Esophagus muscularis mucosa (tissue), 4 donors: ENCODE measurements at regions of chr16 and their contacts with region 1.

Region 1: DNA sequence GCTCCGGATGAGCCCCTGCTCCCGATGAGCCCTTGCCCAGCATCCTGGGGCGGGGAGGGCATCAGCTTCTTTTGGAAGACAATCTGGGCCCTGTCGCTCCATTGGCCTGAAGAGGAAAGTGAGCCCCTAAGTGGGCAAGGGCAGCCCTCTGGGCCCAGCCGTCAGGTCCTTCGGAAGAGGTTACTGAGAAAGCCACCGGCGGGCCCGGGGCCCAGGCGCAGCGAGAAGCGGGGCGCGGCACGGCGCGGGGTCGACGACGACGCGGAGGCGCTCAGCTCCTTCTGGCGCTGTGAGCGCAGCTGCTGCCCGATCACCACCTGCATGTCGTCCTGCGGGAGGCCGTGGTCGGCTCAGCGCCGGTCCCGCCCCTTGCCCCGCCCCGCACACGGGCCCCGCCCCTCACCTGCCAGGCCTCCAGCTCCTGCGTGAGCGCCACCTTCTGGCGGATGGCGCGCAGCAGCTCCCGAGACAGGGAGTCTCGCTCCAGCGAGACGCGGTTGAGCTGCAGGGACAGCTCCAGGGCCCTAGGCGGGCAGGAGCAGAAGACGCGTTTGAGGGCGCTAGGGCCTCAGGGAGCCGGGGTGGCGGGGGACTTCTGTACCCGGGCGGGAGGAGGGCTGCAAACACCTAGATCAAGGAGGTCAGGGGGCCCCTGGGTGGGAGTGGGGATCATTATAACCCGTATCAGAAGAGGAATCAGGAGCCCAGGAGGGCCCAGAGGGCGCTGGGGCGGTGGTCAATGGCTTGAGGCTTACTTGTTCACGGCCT is 4.3 kb downstream of the THOC6 start:
- DNase-seq: no peak
- H3K4me3 ChIP-seq: peak overlapping the region in 3 of 4 donors; percentile 16 to 33 (median 22)
- H3K27ac ChIP-seq: peak overlapping the region in 1 of 4 donors; percentile 34
- H3K4me1 ChIP-seq: peaks cover 27 to 52% (median 45%) of the 10 kb centered on the region in 4 donors
- H3K27me3 ChIP-seq: peaks cover 0 to 46% (median 24%) of the 10 kb centered on the region in 4 donors
- CTCF ChIP-seq: peak; percentile 76 to 88 (median 81)
- EP300 ChIP-seq: no peak
- POLR2A ChIP-seq: no peak

Region 2: GRCh38 chr16:2686912-2687507 is 341.1 kb before region 1 on chr16:
- intact Hi-C with region 1: no loop called
- DNase-seq: no peak
- H3K4me3 ChIP-seq: no peak overlapping the region
- H3K27ac ChIP-seq: no peak overlapping the region
- H3K4me1 ChIP-seq: peaks cover 21 to 51% (median 32%) of the 10 kb centered on the region in 4 donors
- H3K27me3 ChIP-seq: no peaks in the 10 kb centered on the region
- CTCF ChIP-seq: no peak
- EP300 ChIP-seq: no peak
- POLR2A ChIP-seq: no peak

Region 3: DNA sequence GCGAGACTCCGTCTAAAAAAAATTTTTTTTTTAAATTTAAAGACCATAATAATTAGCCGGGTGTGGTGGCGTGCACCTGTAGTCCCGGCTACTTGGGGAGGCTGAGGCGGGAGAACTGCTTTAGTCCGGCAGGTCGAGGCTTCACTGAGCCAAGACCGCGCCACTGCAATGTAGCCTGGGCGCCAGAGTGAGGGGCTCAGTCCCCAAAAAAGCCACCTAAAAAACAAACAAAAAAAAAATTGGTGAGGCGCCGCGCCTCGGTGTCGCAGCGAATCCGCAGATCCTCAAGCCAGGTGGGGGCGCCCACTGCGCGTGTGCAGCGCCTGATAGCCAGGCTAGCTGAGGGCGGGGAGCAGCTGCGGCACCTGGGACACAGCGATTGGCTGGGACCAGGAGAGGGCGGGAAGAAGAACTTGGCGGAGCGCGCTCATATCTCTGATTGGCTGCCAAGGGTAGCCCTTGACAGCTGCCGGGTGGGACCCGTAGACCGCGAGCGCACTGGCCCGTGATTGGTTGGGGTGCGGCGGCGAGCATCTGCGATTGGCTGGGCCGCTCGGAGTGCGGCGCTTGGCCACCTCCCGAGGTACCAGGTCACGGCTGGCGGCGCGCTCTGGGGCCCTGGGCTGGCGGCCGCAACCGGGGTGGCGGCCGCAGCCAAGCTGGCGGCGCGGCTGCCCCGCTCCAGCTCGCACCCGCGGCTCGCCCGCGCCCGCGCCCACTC is 24.4 kb before region 1 on chr16:
- intact Hi-C with region 1: loop called (anchors 1 kb)
- DNase-seq: peak; percentile 99
- H3K4me3 ChIP-seq: peak overlapping the region; percentile 38 to 66 (median 42)
- H3K27ac ChIP-seq: no peak overlapping the region
- H3K4me1 ChIP-seq: peaks cover 3 to 18% (median 12%) of the 10 kb centered on the region in 4 donors
- H3K27me3 ChIP-seq: peaks cover 0 to 71% (median 5%) of the 10 kb centered on the region in 4 donors
- CTCF ChIP-seq: peak; percentile 59 to 85 (median 67)
- EP300 ChIP-seq: no peak
- POLR2A ChIP-seq: no peak

Region 4: GRCh38 chr16:3074860-3075522 is 46.9 kb after region 1 on chr16:
- intact Hi-C with region 1: no loop called
- DNase-seq: no peak
- H3K4me3 ChIP-seq: no peak overlapping the region
- H3K27ac ChIP-seq: no peak overlapping the region
- H3K4me1 ChIP-seq: peaks cover 0 to 13% (median 4%) of the 10 kb centered on the region in 4 donors
- H3K27me3 ChIP-seq: peaks cover 0 to 10% (median 0%) of the 10 kb centered on the region in 4 donors
- CTCF ChIP-seq: no peak
- EP300 ChIP-seq: no peak
- POLR2A ChIP-seq: no peak